Head of caudate nucleus (tissue), 42 donors: ENCODE measurements at regions of chr2 and their contacts with region 1.

Region 1: GRCh38 chr2:209334198-209335017 is 89.4 kb upstream of the MAP2 start:
- DNase-seq: peak; percentile 33 to 84 (median 66)

Region 2: GRCh38 chr2:209577376-209578357 is 243.3 kb after region 1 on chr2:
- intact Hi-C with region 1: loop called (anchors 10 kb)
- DNase-seq: no peak

Region 3: GRCh38 chr2:210147614-210148013 is 813.2 kb after region 1 on chr2:
- intact Hi-C with region 1: no loop called
- DNase-seq: no peak